Naive thymus-derived CD4-positive, alpha-beta T cell (primary cell): ENCODE measurements at regions of chr17 and their contacts with region 1.

Region 1: GRCh38 chr17:66200685-66201092 is 8.8 kb upstream of the CEP112 start:
- DNase-seq: peak in 7 of 9 donors; percentile 20 to 57 (median 55)
- ATAC-seq: peak; percentile 66
- H3K4me3 ChIP-seq: no peak overlapping the region
- H3K4me3 Mint-ChIP-seq: peak overlapping the region in 6 of 10 donors; percentile 21 to 66 (median 44)
- H3K27ac ChIP-seq: no peak overlapping the region
- H3K27ac Mint-ChIP-seq: peak overlapping the region in 8 of 9 donors; percentile 25 to 89 (median 69)
- H3K4me1 ChIP-seq: peaks cover 0 to 17% of the 10 kb centered on the region in 2 donors
- H3K4me1 Mint-ChIP-seq: peaks cover 12 to 26% (median 21%) of the 10 kb centered on the region in 7 donors
- H3K27me3 ChIP-seq: no peaks in the 10 kb centered on the region
- H3K27me3 Mint-ChIP-seq: peaks cover 0 to 4% (median 0%) of the 10 kb centered on the region in 5 donors

Region 2: GRCh38 chr17:66248285-66248684 is 47.6 kb after region 1 on chr17:
- CTCF ChIA-PET with region 1: interaction called, 4 read pairs
- POLR2A ChIA-PET with region 1: no interaction called
- intact Hi-C with region 1: loop called in 1 of 2 experiments (anchors 1 kb)
- DNase-seq: no peak
- ATAC-seq: no peak
- H3K4me3 ChIP-seq: no peak overlapping the region
- H3K4me3 Mint-ChIP-seq: peak overlapping the region in 3 of 10 donors; percentile 17 to 42 (median 25)
- H3K27ac ChIP-seq: no peak overlapping the region
- H3K27ac Mint-ChIP-seq: peak overlapping the region in 3 of 9 donors; percentile 54 to 89 (median 68)
- H3K4me1 ChIP-seq: peaks cover 8 to 27% of the 10 kb centered on the region in 2 donors
- H3K4me1 Mint-ChIP-seq: peaks cover 2 to 58% (median 41%) of the 10 kb centered on the region in 7 donors
- H3K27me3 ChIP-seq: no peaks in the 10 kb centered on the region
- H3K27me3 Mint-ChIP-seq: peaks cover 0 to 2% (median 0%) of the 10 kb centered on the region in 5 donors

Region 3: GRCh38 chr17:66625311-66625775 is 424.7 kb after region 1 on chr17:
- CTCF ChIA-PET with region 1: no interaction called
- POLR2A ChIA-PET with region 1: no interaction called
- intact Hi-C with region 1: loop called (anchors 1 to 5 kb)
- DNase-seq: peak in 2 of 9 donors; percentile 20 to 28
- ATAC-seq: no peak
- H3K4me3 ChIP-seq: no peak overlapping the region
- H3K4me3 Mint-ChIP-seq: peak overlapping the region in 1 of 10 donors; percentile 2
- H3K27ac ChIP-seq: no peak overlapping the region
- H3K27ac Mint-ChIP-seq: peak overlapping the region in 2 of 9 donors; percentile 9 to 77
- H3K4me1 ChIP-seq: no peaks in the 10 kb centered on the region
- H3K4me1 Mint-ChIP-seq: peaks cover 19 to 87% (median 73%) of the 10 kb centered on the region in 7 donors
- H3K27me3 ChIP-seq: no peaks in the 10 kb centered on the region
- H3K27me3 Mint-ChIP-seq: no peaks in the 10 kb centered on the region

Region 4: GRCh38 chr17:66715745-66716156 is 515.1 kb after region 1 on chr17:
- CTCF ChIA-PET with region 1: no interaction called
- POLR2A ChIA-PET with region 1: no interaction called
- intact Hi-C with region 1: loop called (anchors 1 to 2 kb)
- DNase-seq: peak in 7 of 9 donors; percentile 13 to 51 (median 41)
- ATAC-seq: peak; percentile 62
- H3K4me3 ChIP-seq: no peak overlapping the region
- H3K4me3 Mint-ChIP-seq: no peak overlapping the region
- H3K27ac ChIP-seq: no peak overlapping the region
- H3K27ac Mint-ChIP-seq: peak overlapping the region in 3 of 9 donors; percentile 46 to 83 (median 65)
- H3K4me1 ChIP-seq: peaks cover 10 to 29% of the 10 kb centered on the region in 2 donors
- H3K4me1 Mint-ChIP-seq: peaks cover 12 to 49% (median 33%) of the 10 kb centered on the region in 7 donors
- H3K27me3 ChIP-seq: no peaks in the 10 kb centered on the region
- H3K27me3 Mint-ChIP-seq: no peaks in the 10 kb centered on the region

Region 5: DNA sequence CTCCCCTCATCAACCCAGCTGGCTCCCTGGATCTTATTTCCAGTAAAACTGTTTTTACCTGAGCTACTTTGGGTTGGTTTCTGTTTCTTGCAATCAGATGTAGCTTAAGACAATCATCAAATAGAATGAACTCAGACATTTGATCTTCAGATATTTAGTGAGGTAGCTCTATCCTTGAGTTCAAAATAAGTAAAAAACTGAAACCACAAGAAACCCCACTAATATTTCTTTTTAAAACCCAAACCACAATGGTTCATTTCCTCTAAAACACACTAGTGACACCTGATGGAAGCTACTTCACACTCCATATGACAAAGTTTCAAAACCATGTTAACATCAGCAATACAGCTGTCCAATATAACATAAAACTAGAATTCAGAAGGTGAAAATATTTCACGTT is 881.4 kb after region 1 on chr17:
- CTCF ChIA-PET with region 1: no interaction called
- POLR2A ChIA-PET with region 1: no interaction called
- intact Hi-C with region 1: loop called in 1 of 2 experiments (anchors 5 kb)
- DNase-seq: peak in 6 of 9 donors; percentile 38 to 70 (median 60)
- ATAC-seq: peak; percentile 79
- H3K4me3 ChIP-seq: no peak overlapping the region
- H3K4me3 Mint-ChIP-seq: peak overlapping the region in 7 of 10 donors; percentile 7 to 57 (median 39)
- H3K27ac ChIP-seq: peak overlapping the region; percentile 12
- H3K27ac Mint-ChIP-seq: peak overlapping the region; percentile 53 to 83 (median 68)
- H3K4me1 ChIP-seq: peaks cover 9 to 19% of the 10 kb centered on the region in 2 donors
- H3K4me1 Mint-ChIP-seq: peaks cover 14 to 37% (median 24%) of the 10 kb centered on the region in 7 donors
- H3K27me3 ChIP-seq: no peaks in the 10 kb centered on the region
- H3K27me3 Mint-ChIP-seq: no peaks in the 10 kb centered on the region